AG04449 (cell line): ENCODE measurements at regions of chr17 and their contacts with region 1.

Region 1: GRCh38 chr17:49381063-49381462 is 19.0 kb upstream of the ZNF652 start:
- DNase-seq: no peak
- H3K4me3 ChIP-seq: no peak overlapping the region
- CTCF ChIP-seq: no peak

Region 2: GRCh38 chr17:49344914-49345313 is 36.1 kb before region 1 on chr17:
- CTCF ChIA-PET with region 1: no interaction called
- POLR2A ChIA-PET with region 1: no interaction called
- DNase-seq: no peak
- H3K4me3 ChIP-seq: no peak overlapping the region
- CTCF ChIP-seq: no peak

Region 3: GRCh38 chr17:49365667-49366066 is 15.4 kb before region 1 on chr17:
- CTCF ChIA-PET with region 1: interaction called, 38 read pairs
- POLR2A ChIA-PET with region 1: no interaction called
- DNase-seq: no peak
- H3K4me3 ChIP-seq: no peak overlapping the region
- CTCF ChIP-seq: no peak